GM13976 (cell line): ENCODE measurements at regions of chr16 and their contacts with region 1.

Region 1: DNA sequence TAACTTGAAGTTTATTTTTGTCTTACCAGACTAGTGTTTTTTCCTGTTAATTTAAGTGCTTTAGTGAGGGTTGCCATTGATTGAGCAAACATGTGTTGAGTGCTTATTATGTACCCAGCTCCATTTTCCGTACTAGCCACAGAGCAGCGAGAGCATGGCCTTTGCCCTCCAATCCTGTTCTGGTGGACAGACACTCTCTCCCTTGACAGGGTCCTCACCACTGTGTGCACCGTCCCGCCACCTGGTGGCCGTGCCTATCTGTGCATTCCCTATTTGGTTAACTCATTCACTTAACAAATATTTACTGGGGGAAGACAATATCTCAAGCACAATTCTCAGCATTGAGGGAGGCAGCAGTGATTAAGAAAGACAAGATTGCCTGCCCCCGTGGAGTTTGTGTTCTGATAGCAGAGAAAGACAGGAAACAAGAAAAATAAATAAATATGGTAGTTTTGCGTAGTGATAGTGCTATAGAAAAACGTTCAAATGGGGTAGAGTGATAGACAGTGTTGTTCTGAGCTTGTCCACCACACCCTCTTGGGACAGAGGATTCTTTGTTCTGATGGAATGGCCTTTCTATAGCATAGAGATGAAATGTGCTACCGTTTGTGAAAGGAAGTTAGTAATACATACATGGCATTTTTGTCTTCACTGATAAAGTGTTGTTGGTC is 13.0 kb downstream of the CDH13 start:
- DNase-seq: peak; percentile 64
- CTCF ChIP-seq: peak; percentile 83

Region 2: GRCh38 chr16:81366316-81366932 is 1273.4 kb before region 1 on chr16:
- in situ Hi-C with region 1: no loop called
- DNase-seq: peak; percentile 61
- CTCF ChIP-seq: peak; percentile 56

Region 3: DNA sequence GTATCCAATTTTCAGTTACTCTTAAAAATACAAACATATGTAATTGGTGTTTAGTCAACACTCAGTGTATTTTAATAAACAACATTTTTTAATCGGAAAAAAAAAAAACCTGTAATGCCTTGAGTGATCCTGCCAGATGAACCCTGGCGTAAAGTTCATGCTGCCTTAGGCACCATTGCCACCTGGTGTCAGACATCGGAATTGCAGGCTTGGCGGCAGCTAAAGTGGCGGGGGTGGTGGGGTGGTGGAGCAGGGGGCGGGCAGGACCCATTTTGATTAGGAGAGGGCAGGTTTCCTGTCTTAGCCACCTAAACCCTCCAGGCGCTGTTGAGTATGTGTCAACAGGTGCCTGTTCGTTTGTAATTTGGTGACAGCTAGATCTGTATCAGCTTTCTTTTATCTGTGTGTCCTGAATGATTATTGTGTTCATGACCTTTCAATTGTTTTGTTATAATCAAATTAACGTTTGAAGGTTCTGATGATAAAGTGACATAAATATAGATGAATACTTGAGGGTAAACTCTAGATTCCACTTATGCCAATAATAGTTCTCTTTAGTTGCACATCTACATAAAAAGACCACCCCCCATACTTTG is 575.7 kb after region 1 on chr16:
- in situ Hi-C with region 1: loop called (anchors 25 kb)
- DNase-seq: peak; percentile 59
- CTCF ChIP-seq: peak; percentile 69